ENCODE measurements at regions of chr16 and their contacts with region 1.

Region 1: GRCh38 chr16:69089091-69089910 is 16.2 kb upstream of the HAS3 start:
- DNase-seq: no peak
- H3K4me3 ChIP-seq: no peak overlapping the region
- H3K27ac ChIP-seq: no peak overlapping the region
- H3K4me1 ChIP-seq: no peaks in the 10 kb centered on the region
- H3K27me3 ChIP-seq: no peaks in the 10 kb centered on the region
- CTCF ChIP-seq: no peak
- EP300 ChIP-seq: no peak
- POLR2A ChIP-seq: no peak

Region 2: GRCh38 chr16:68396481-68396880 is 692.8 kb before region 1 on chr16:
- in situ Hi-C with region 1: no loop called
- intact Hi-C with region 1: no loop called
- DNase-seq: peak; percentile 69
- H3K4me3 ChIP-seq: no peak overlapping the region
- H3K27ac ChIP-seq: no peak overlapping the region
- H3K4me1 ChIP-seq: peaks cover 0 to 9% (median 4%) of the 10 kb centered on the region in 4 donors
- H3K27me3 ChIP-seq: no peaks in the 10 kb centered on the region
- CTCF ChIP-seq: peak; percentile 51 to 84 (median 67)
- EP300 ChIP-seq: no peak
- POLR2A ChIP-seq: no peak

Region 3: GRCh38 chr16:68644715-68645493 is 444.4 kb before region 1 on chr16 and contains the start of gene CDH3:
- in situ Hi-C with region 1: loop called in 1 of 4 experiments (anchors 25 kb)
- intact Hi-C with region 1: no loop called
- DNase-seq: peak; percentile 65
- H3K4me3 ChIP-seq: peak within 1 kb of the TSS in 3 of 4 donors; percentile 24 to 50 (median 39)
- H3K27ac ChIP-seq: no peak within 1 kb of the TSS
- H3K4me1 ChIP-seq: peaks cover 16 to 31% (median 26%) of the 10 kb centered on the region in 4 donors
- H3K27me3 ChIP-seq: peaks cover 78% of the 10 kb centered on the region
- CTCF ChIP-seq: no peak
- EP300 ChIP-seq: no peak
- POLR2A ChIP-seq: no peak
- total RNA-seq, gene CDH3: 0.32 to 2.0 TPM in 2 of 4 donors, not detected in the others